Activated CD4-positive, alpha-beta T cell treated with anti-CD3 and anti-CD28 coated beads, Interleukin-2, amount 10 ng/mL, durations not matched to agents 24 days and 14 days (primary cell): ENCODE measurements at regions of chr17 and their contacts with region 1.

Region 1: GRCh38 chr17:31388770-31389661 is 2.5 kb upstream of the RAB11FIP4 start:
- DNase-seq: peak; percentile 81
- H3K4me3 Mint-ChIP-seq: no peak overlapping the region
- H3K27ac Mint-ChIP-seq: no peak overlapping the region
- H3K4me1 Mint-ChIP-seq: peaks cover 6% of the 10 kb centered on the region
- H3K27me3 Mint-ChIP-seq: peaks cover 41% of the 10 kb centered on the region

Region 2: GRCh38 chr17:31524926-31525800 is 136.1 kb after region 1 on chr17:
- intact Hi-C with region 1: loop called (anchors 2 kb)
- DNase-seq: peak; percentile 95
- H3K4me3 Mint-ChIP-seq: no peak overlapping the region
- H3K27ac Mint-ChIP-seq: no peak overlapping the region
- H3K4me1 Mint-ChIP-seq: no peaks in the 10 kb centered on the region
- H3K27me3 Mint-ChIP-seq: no peaks in the 10 kb centered on the region